HepG2 (cell line): ENCODE measurements at regions of chr1 and their contacts with region 1.

Region 1: DNA sequence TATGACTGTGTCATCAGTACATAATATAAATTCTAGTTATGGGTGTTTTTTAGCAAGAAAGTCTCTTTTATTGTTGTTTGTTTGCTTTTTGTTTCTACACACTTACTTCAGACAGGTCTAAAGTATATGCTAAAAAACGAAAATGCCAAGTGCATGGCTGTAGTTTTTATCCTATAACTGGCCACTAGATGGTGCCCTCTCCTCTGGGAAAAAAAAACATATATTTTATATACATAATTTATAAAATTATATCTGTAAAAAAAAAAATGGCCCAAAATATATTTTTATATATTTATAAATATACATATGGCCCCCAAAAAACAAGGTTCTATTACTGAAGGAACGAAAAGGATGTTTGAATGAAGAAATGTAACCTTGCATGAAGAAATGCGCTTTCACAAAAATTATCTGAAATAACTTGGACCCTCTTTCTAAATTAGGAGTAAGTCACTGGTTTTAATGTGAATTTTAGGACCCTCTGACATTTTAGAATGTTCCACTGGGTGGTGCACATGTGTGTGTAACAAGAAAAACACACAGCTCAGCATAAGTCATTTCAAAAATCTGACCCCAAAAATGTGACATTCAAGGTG is 93.5 kb downstream of the TTLL7 start:
- DNase-seq: no peak
- ATAC-seq: no peak
- H3K4me3 ChIP-seq: no peak overlapping the region
- H3K27ac ChIP-seq: no peak overlapping the region
- H3K4me1 ChIP-seq: peaks cover 12% of the 10 kb centered on the region
- H3K27me3 ChIP-seq: no peaks in the 10 kb centered on the region
- CTCF ChIP-seq: peak; percentile 38
- EP300 ChIP-seq: no peak
- POLR2A ChIP-seq: no peak
- RAD21 ChIP-seq: no peak

Region 2: GRCh38 chr1:83864991-83865390 is 40.4 kb before region 1 on chr1:
- CTCF ChIA-PET with region 1: no interaction called
- POLR2A ChIA-PET with region 1: no interaction called
- in situ Hi-C with region 1: no loop called
- intact Hi-C with region 1: no loop called
- DNase-seq: no peak
- ATAC-seq: no peak
- H3K4me3 ChIP-seq: no peak overlapping the region
- H3K27ac ChIP-seq: no peak overlapping the region
- H3K4me1 ChIP-seq: no peaks in the 10 kb centered on the region
- H3K27me3 ChIP-seq: no peaks in the 10 kb centered on the region
- CTCF ChIP-seq: no peak
- EP300 ChIP-seq: no peak
- POLR2A ChIP-seq: no peak
- RAD21 ChIP-seq: no peak

Region 3: DNA sequence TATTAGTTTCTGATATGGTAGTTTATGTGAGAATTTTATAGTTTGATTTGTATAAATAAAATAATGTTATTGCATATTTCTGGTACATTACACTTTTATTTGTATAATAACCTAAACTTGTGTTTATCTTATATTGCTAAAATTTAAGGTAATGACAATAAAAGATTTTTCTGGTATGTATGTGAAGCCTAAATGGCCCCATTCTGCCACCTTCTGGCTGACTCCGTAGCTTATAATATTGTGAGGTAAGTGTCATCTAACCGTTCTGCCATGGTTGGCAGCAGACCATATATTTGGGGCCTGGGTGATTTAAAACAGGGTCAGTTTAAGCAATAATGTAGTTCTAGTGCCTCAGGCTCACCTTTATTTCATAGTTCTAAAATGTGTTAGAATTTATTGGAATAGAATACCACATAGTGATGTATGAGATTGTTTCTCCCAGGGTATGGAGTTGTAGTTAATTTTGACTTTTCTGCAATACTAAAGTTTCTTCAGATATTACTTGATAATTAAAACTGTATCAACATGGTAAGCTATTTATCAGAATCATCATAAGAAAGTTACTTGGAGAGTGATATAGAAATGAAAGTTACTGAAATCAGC is 217.5 kb after region 1 on chr1:
- CTCF ChIA-PET with region 1: no interaction called
- POLR2A ChIA-PET with region 1: no interaction called
- in situ Hi-C with region 1: no loop called
- intact Hi-C with region 1: loop called (anchors 1 kb)
- DNase-seq: peak; percentile 38
- ATAC-seq: peak; percentile 81
- H3K4me3 ChIP-seq: no peak overlapping the region
- H3K27ac ChIP-seq: no peak overlapping the region
- H3K4me1 ChIP-seq: no peaks in the 10 kb centered on the region
- H3K27me3 ChIP-seq: no peaks in the 10 kb centered on the region
- CTCF ChIP-seq: peak; percentile 61
- EP300 ChIP-seq: no peak
- POLR2A ChIP-seq: no peak
- RAD21 ChIP-seq: no peak

Region 4: GRCh38 chr1:84433258-84434080 is 528.1 kb after region 1 on chr1:
- CTCF ChIA-PET with region 1: no interaction called
- POLR2A ChIA-PET with region 1: no interaction called
- in situ Hi-C with region 1: no loop called
- intact Hi-C with region 1: loop called (anchors 1 kb)
- DNase-seq: peak; percentile 30
- ATAC-seq: peak; percentile 61
- H3K4me3 ChIP-seq: no peak overlapping the region
- H3K27ac ChIP-seq: no peak overlapping the region
- H3K4me1 ChIP-seq: no peaks in the 10 kb centered on the region
- H3K27me3 ChIP-seq: no peaks in the 10 kb centered on the region
- CTCF ChIP-seq: peak; percentile 59
- EP300 ChIP-seq: no peak
- POLR2A ChIP-seq: no peak
- RAD21 ChIP-seq: no peak

Region 5: GRCh38 chr1:84772428-84772943 is 867.1 kb after region 1 on chr1:
- CTCF ChIA-PET with region 1: no interaction called
- POLR2A ChIA-PET with region 1: no interaction called
- in situ Hi-C with region 1: no loop called
- intact Hi-C with region 1: loop called (anchors 1 kb)
- DNase-seq: peak; percentile 55
- ATAC-seq: peak; percentile 94
- H3K4me3 ChIP-seq: no peak overlapping the region
- H3K27ac ChIP-seq: no peak overlapping the region
- H3K4me1 ChIP-seq: no peaks in the 10 kb centered on the region
- H3K27me3 ChIP-seq: peaks cover 0 to 14% of the 10 kb centered on the region in 2 experiments; a peak in 2 of 5 replicates
- CTCF ChIP-seq: peak; percentile 84
- EP300 ChIP-seq: no peak
- POLR2A ChIP-seq: no peak
- RAD21 ChIP-seq: peak; percentile 60